ENCODE measurements at regions of chr4 and their contacts with region 1.

Region 1: DNA sequence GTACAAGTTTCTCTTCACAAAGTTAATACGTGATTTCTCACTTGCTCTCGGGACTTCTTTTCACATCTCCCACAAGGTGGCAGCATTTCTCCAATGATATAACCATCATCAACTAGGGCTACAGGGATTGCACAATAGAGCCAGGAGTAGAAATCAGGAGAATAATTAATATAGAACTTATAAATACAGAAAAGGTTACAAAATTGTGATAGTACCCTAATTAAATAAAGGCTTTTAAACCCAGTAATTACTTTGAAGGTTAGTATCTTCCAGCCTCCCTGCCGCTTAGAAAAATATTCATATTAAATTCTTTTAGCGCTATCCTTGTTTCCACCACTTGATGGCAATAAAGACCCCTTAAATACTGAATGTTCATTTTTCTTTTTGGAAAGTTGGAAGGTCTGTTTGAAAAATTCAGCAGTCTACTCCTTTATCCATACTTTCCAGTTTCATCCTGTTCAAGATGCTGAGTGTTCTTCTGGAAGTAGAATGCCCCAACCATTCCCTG is 65.8 kb downstream of the RASGEF1B start:
- DNase-seq: peak; percentile 20
- H3K4me3 ChIP-seq: peak overlapping the region in 1 of 4 donors; percentile 30
- H3K27ac ChIP-seq: no peak overlapping the region
- H3K4me1 ChIP-seq: peaks cover 0 to 6% (median 0%) of the 10 kb centered on the region in 4 donors
- H3K27me3 ChIP-seq: no peaks in the 10 kb centered on the region
- CTCF ChIP-seq: peak; percentile 70 to 95 (median 83)
- EP300 ChIP-seq: no peak
- POLR2A ChIP-seq: no peak

Region 2: DNA sequence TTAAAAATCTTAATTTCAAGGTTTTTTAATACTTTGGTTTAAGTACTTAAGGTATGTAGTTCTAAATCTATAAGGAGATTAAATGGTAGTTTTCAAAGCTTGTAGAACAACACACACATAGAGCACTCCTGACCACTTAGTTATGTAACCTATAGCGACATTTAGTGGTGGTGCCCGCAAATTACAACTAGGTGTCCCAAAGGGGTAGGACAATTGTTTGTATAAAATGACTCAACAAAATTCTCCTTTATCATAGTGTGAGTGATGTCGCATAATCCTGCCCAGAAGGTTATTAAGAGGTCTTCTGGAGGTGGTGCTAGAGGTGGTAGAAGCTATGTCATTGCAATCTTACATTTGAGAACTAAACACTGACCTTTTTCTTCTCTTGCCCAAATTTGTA is 438.8 kb after region 1 on chr4:
- in situ Hi-C with region 1: loop called in 2 of 4 experiments (anchors 10 kb)
- intact Hi-C with region 1: no loop called
- DNase-seq: peak; percentile 87
- H3K4me3 ChIP-seq: no peak overlapping the region
- H3K27ac ChIP-seq: no peak overlapping the region
- H3K4me1 ChIP-seq: no peaks in the 10 kb centered on the region
- H3K27me3 ChIP-seq: no peaks in the 10 kb centered on the region
- CTCF ChIP-seq: peak; percentile 76 to 88 (median 84)
- EP300 ChIP-seq: no peak
- POLR2A ChIP-seq: no peak

Region 3: DNA sequence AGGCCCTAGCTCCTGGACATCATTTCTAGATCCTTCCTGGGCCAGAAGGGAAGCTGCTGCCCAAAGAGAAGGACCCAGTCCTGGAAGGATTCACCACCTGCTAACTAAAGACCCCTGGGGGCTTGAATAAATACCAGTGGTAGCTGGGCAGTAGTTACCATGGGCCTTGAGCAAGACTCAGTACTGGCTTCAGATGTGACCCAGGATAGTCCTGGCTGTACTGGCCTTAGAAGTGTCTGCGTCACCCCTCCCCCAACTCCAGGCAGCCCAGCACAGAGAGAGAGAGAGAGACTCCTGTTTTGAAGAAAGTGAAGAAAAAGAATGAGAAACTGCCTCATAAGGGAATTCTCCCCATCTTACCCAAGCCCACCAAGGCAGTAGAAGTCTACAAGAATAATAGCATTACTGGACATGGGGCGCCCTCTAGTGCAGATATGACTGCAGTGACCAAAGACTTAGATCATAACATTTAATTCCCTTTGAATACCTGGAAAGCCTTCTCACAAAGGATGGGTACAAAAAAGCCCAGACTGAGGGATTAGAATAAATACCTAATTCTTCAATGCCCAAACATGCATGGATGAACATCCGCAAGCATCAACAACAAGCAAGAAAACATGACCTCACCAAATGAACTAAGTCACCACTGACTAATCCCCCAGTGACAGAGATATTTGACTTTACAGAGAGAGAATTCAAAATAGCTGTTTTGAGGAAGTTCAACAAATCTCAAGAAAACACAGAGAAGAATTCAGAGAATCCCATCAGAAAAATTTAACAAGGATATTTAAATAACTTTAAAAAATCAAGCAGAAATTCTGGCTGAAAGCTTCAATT is 796.1 kb after region 1 on chr4:
- in situ Hi-C with region 1: loop called (anchors 10 to 25 kb)
- intact Hi-C with region 1: no loop called
- DNase-seq: peak; percentile 35
- H3K4me3 ChIP-seq: no peak overlapping the region
- H3K27ac ChIP-seq: no peak overlapping the region
- H3K4me1 ChIP-seq: no peaks in the 10 kb centered on the region
- H3K27me3 ChIP-seq: no peaks in the 10 kb centered on the region
- CTCF ChIP-seq: peak; percentile 44 to 63 (median 58)
- EP300 ChIP-seq: no peak
- POLR2A ChIP-seq: no peak

Region 4: GRCh38 chr4:82268050-82268825 is 862.3 kb after region 1 on chr4:
- in situ Hi-C with region 1: no loop called
- intact Hi-C with region 1: loop called (anchors 10 kb)
- DNase-seq: peak; percentile 49
- H3K4me3 ChIP-seq: no peak overlapping the region
- H3K27ac ChIP-seq: peak overlapping the region in 2 of 4 donors; percentile 3 to 16
- H3K4me1 ChIP-seq: peaks cover 0 to 10% (median 0%) of the 10 kb centered on the region in 4 donors
- H3K27me3 ChIP-seq: no peaks in the 10 kb centered on the region
- CTCF ChIP-seq: peak; percentile 43 to 63 (median 60)
- EP300 ChIP-seq: no peak
- POLR2A ChIP-seq: no peak

Measured in transverse colon (tissue), 4 donors.